Activated CD4-positive, alpha-beta memory T cell treated with anti-CD3 and anti-CD28 coated beads for 36 hours (primary cell): ENCODE measurements at regions of chr9 and their contacts with region 1.

Region 1: DNA sequence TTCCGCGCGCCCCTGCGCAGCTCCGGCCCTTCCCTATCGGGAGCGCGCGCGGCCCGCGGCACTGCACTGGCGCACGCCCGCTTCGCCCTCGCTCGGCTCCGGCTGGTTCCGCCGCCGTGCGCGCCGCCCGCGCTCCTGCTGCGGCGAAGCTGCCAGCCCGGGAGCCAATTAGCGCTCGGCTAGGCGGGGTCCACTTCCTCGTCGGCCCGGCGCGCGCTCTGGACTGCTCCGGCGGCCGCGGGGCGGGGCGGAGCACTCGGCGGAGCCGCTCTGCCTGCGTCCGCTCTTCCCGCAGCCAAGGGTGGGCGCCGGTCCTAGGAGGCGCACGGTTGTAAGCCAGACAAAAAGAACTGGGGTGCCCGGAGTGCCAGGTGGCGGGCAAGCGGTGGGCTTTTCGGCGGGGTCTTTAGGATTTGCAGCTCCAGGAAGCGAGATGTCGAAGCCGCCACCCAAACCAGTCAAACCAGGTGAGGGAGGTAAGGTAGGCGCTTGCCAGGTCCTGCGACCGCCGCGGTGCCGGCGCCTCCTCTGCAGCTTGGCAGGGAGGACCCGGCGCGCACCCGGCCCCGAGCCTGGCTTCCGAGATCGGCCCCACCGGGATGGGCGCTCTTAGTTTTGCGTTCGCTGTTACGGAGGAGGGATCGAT is at the start of gene OSTF1:
- DNase-seq: peak; percentile 95
- H3K4me3 Mint-ChIP-seq: peak within 1 kb of the TSS; percentile 96
- H3K27ac Mint-ChIP-seq: peak within 1 kb of the TSS; percentile 98
- H3K4me1 Mint-ChIP-seq: peaks cover 54% of the 10 kb centered on the region
- H3K27me3 Mint-ChIP-seq: no peaks in the 10 kb centered on the region
- total RNA-seq, gene OSTF1: 151 TPM

Region 2: GRCh38 chr9:74952281-74953151 is 135.9 kb before region 1 on chr9 and contains the start of gene C9orf40:
- CTCF ChIA-PET with region 1: interaction called, 3 read pairs
- POLR2A ChIA-PET with region 1: interaction called, 13 read pairs
- intact Hi-C with region 1: loop called (anchors 1 kb)
- DNase-seq: peak; percentile 93
- H3K4me3 Mint-ChIP-seq: peak within 1 kb of the TSS; percentile 92
- H3K27ac Mint-ChIP-seq: peak within 1 kb of the TSS; percentile 88
- H3K4me1 Mint-ChIP-seq: peaks cover 22% of the 10 kb centered on the region
- H3K27me3 Mint-ChIP-seq: no peaks in the 10 kb centered on the region
- total RNA-seq, gene C9orf40: 17.6 to 18.3 TPM

Region 3: DNA sequence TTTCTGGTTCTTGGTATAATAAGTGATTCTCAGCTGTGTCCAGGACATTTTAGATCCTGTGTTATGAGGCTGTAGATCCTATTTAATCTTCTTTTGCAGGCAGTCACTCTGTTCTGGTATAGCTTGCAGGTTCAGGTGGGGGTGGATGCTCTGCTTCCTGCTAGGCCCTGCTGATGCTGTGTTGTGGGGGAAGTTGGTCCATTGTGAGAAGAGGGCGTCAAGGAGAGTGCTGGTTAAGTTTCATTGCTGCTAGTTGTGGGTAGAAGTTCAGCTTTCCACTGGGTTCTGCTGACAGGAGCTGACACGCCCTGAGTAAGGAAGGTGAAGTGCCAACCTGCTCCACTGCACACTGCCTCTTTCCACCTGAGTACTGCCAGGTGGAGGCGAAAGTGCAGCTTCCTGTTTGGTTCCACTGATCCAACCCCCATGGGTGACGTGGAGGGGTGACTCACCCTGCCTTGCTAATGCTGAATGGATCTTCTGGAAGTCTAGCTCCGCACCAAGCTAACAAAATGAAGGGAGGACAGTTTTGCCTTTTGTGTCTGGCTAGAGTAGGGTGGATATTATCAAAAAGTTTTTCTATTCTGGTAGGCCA is 16.8 kb before region 1 on chr9:
- CTCF ChIA-PET with region 1: interaction called, 12 read pairs
- POLR2A ChIA-PET with region 1: no interaction called
- intact Hi-C with region 1: loop called (anchors 2 kb)
- DNase-seq: peak; percentile 86
- H3K4me3 Mint-ChIP-seq: no peak overlapping the region
- H3K27ac Mint-ChIP-seq: peak overlapping the region; percentile 82
- H3K4me1 Mint-ChIP-seq: peaks cover 27% of the 10 kb centered on the region
- H3K27me3 Mint-ChIP-seq: no peaks in the 10 kb centered on the region

Region 4: GRCh38 chr9:75120686-75121085 is 32.3 kb after region 1 on chr9:
- CTCF ChIA-PET with region 1: interaction called, 5 read pairs
- POLR2A ChIA-PET with region 1: interaction called, 16 read pairs
- intact Hi-C with region 1: loop called (anchors 2 kb)
- DNase-seq: no peak
- H3K4me3 Mint-ChIP-seq: no peak overlapping the region
- H3K27ac Mint-ChIP-seq: peak overlapping the region; percentile 7
- H3K4me1 Mint-ChIP-seq: peaks cover 61% of the 10 kb centered on the region
- H3K27me3 Mint-ChIP-seq: no peaks in the 10 kb centered on the region

Region 5: GRCh38 chr9:75148561-75148960 is 60.2 kb after region 1 on chr9:
- CTCF ChIA-PET with region 1: interaction called, 8 read pairs
- POLR2A ChIA-PET with region 1: interaction called, 24 read pairs
- intact Hi-C with region 1: loop called (anchors 1 kb)
- DNase-seq: peak; percentile 41
- H3K4me3 Mint-ChIP-seq: no peak overlapping the region
- H3K27ac Mint-ChIP-seq: peak overlapping the region; percentile 82
- H3K4me1 Mint-ChIP-seq: peaks cover 69% of the 10 kb centered on the region
- H3K27me3 Mint-ChIP-seq: no peaks in the 10 kb centered on the region

Region 6: GRCh38 chr9:75395336-75395735 is 307.0 kb after region 1 on chr9:
- CTCF ChIA-PET with region 1: no interaction called
- POLR2A ChIA-PET with region 1: no interaction called
- intact Hi-C with region 1: no loop called
- DNase-seq: no peak
- H3K4me3 Mint-ChIP-seq: no peak overlapping the region
- H3K27ac Mint-ChIP-seq: no peak overlapping the region
- H3K4me1 Mint-ChIP-seq: no peaks in the 10 kb centered on the region
- H3K27me3 Mint-ChIP-seq: no peaks in the 10 kb centered on the region

Region 7: GRCh38 chr9:75890472-75891276 is 802.3 kb after region 1 on chr9 and contains the start of gene PCSK5:
- CTCF ChIA-PET with region 1: no interaction called
- POLR2A ChIA-PET with region 1: no interaction called
- intact Hi-C with region 1: loop called (anchors 5 kb)
- DNase-seq: peak; percentile 90
- H3K4me3 Mint-ChIP-seq: peak within 1 kb of the TSS; percentile 91
- H3K27ac Mint-ChIP-seq: peak within 1 kb of the TSS; percentile 61
- H3K4me1 Mint-ChIP-seq: peaks cover 28% of the 10 kb centered on the region
- H3K27me3 Mint-ChIP-seq: peaks cover 13% of the 10 kb centered on the region
- total RNA-seq, gene PCSK5: 2.0 to 2.1 TPM